ENCODE measurements at regions of chr2 and their contacts with region 1.

Region 1: DNA sequence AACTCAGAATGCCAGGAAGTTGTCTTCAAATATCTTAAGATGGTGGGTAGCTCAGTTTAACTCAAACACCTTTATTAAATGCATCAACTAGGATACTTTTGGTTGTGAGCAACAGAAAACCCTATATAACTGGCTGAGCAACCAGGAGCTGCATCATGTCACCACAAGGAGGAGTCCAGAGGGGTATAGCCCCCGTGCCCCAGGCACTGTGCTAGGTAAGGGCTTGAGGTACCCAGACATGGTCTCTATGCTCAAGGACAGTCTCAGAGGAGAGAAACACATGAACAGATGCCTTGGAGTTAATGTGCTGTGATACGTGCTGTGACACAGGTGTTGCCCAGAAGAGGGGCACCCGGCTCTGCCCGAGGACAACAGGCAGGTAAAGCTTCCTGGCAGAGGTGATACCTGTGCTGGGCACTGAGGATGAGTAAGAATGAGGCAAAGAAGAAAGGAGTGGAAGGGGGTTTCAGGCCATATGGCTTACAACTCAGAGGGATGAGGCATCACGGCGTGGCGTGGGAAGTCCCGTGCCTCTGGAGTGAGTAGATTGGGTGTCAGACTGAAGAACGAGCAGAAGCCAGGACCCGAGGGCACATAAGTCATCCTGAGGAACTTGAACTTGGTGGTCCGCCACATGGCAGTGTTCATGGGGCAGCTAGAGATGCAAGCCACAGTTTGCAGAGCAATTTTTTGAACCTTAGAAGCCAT is 32.0 kb upstream of the CAB39 start:
- DNase-seq: peak; percentile 52
- ATAC-seq: peak; percentile 49
- H3K4me3 Mint-ChIP-seq: no peak overlapping the region
- H3K27ac Mint-ChIP-seq: no peak overlapping the region
- H3K4me1 Mint-ChIP-seq: peaks cover 37% of the 10 kb centered on the region
- H3K27me3 Mint-ChIP-seq: no peaks in the 10 kb centered on the region
- CTCF ChIP-seq: no peak

Region 2: GRCh38 chr2:230668184-230668938 is 12.3 kb before region 1 on chr2:
- CTCF ChIA-PET with region 1: interaction called, 20 read pairs
- POLR2A ChIA-PET with region 1: interaction called, 7 read pairs
- intact Hi-C with region 1: no loop called
- DNase-seq: peak; percentile 67
- ATAC-seq: peak; percentile 32
- H3K4me3 Mint-ChIP-seq: peak overlapping the region; percentile 40
- H3K27ac Mint-ChIP-seq: peak overlapping the region; percentile 88
- H3K4me1 Mint-ChIP-seq: peaks cover 69% of the 10 kb centered on the region
- H3K27me3 Mint-ChIP-seq: no peaks in the 10 kb centered on the region
- CTCF ChIP-seq: no peak

Measured in activated CD8-positive, alpha-beta T cell treated with anti-CD3 and anti-CD28 coated beads for 36 hours (primary cell).